ENCODE measurements at regions of chr13 and their contacts with region 1.

Region 1: DNA sequence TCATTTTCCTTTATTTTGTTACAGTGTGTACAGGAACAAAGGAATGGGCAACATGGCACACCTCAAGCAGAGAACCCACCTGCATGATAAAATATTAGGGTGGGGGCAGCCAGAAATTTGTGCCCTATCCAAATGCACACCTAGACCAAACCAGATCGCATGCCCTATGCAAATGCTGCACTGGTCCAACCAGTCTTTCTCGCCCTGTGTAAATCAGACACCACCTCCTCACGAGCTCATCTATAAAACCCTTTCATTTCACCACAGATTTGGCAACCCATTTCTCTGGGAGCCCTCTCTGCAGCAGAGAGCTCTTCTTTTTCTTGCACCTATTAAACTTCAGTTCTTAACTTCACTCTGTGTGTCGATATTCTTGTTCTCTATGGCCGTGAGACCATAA is 1559.2 kb downstream of the SLITRK1 start:
- DNase-seq: no peak
- H3K4me3 ChIP-seq: no peak overlapping the region
- H3K4me3 Mint-ChIP-seq: no peak overlapping the region
- H3K27ac Mint-ChIP-seq: no peak overlapping the region
- H3K4me1 ChIP-seq: 0 out of 2 replicates have a peak, but pooled peaks cover 3% of the 10 kb centered on the region
- H3K4me1 Mint-ChIP-seq: peaks cover 13% of the 10 kb centered on the region
- H3K27me3 ChIP-seq: no peaks in the 10 kb centered on the region
- H3K27me3 Mint-ChIP-seq: no peaks in the 10 kb centered on the region
- CTCF ChIP-seq: no peak

Region 2: DNA sequence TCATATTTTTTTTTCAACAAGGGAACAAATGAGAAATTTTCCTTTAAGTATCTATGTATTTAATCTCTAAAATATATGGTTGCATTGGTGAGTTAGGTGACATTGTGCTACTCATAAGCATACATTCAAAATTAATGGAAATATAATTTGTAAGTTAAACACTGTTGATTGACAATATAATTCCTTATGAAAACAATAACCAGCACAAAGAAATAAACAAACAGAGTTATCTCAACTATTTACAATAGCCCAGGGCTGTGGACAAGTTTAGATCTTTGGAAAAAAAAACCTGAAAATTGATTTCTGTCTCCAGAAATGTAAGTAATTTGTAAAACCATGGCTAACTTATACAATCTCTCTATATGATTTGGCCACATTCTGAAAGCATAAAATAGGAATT is 53.8 kb before region 1 on chr13:
- CTCF ChIA-PET with region 1: no interaction called
- POLR2A ChIA-PET with region 1: no interaction called
- intact Hi-C with region 1: loop called (anchors 10 kb)
- DNase-seq: no peak
- H3K4me3 ChIP-seq: no peak overlapping the region
- H3K4me3 Mint-ChIP-seq: no peak overlapping the region
- H3K27ac Mint-ChIP-seq: no peak overlapping the region
- H3K4me1 ChIP-seq: no peaks in the 10 kb centered on the region
- H3K4me1 Mint-ChIP-seq: no peaks in the 10 kb centered on the region
- H3K27me3 ChIP-seq: no peaks in the 10 kb centered on the region
- H3K27me3 Mint-ChIP-seq: peaks cover 10% of the 10 kb centered on the region
- CTCF ChIP-seq: no peak

Region 3: DNA sequence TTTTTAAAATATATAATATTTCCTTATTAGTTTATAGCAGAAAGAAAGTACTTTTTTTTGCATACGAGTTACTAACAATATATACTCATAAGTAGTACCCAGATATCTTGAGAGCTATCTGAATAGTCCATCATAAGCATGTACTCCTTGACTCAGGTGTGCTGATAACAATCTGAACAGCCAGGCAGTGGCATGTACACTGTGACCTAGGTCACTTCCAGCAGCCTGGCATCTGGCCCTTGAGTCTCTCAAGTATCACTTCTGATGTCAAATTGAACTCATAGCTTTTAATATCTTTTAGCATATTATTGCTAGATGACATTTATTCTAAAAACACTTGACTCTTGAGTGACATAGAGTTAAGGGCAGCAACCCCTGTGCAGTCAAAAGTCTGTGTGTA is 17.5 kb before region 1 on chr13:
- CTCF ChIA-PET with region 1: no interaction called
- POLR2A ChIA-PET with region 1: no interaction called
- intact Hi-C with region 1: no loop called
- DNase-seq: no peak
- H3K4me3 ChIP-seq: no peak overlapping the region
- H3K4me3 Mint-ChIP-seq: no peak overlapping the region
- H3K27ac Mint-ChIP-seq: no peak overlapping the region
- H3K4me1 ChIP-seq: no peaks in the 10 kb centered on the region
- H3K4me1 Mint-ChIP-seq: no peaks in the 10 kb centered on the region
- H3K27me3 ChIP-seq: no peaks in the 10 kb centered on the region
- H3K27me3 Mint-ChIP-seq: no peaks in the 10 kb centered on the region
- CTCF ChIP-seq: no peak

Measured in Caco-2 (cell line).